GM10248 (cell line): ENCODE measurements at regions of chr12 and their contacts with region 1.

Region 1: GRCh38 chr12:53321074-53321814 is at the start of gene AAAS:
- DNase-seq: peak; percentile 97
- CTCF ChIP-seq: peak; percentile 98

Region 2: GRCh38 chr12:52603314-52603713 is 717.9 kb before region 1 on chr12:
- CTCF ChIA-PET with region 1: no interaction called
- POLR2A ChIA-PET with region 1: no interaction called
- DNase-seq: no peak
- CTCF ChIP-seq: no peak

Region 3: GRCh38 chr12:52837413-52837741 is 483.9 kb before region 1 on chr12:
- CTCF ChIA-PET with region 1: no interaction called
- POLR2A ChIA-PET with region 1: no interaction called
- DNase-seq: no peak
- CTCF ChIP-seq: no peak

Region 4: DNA sequence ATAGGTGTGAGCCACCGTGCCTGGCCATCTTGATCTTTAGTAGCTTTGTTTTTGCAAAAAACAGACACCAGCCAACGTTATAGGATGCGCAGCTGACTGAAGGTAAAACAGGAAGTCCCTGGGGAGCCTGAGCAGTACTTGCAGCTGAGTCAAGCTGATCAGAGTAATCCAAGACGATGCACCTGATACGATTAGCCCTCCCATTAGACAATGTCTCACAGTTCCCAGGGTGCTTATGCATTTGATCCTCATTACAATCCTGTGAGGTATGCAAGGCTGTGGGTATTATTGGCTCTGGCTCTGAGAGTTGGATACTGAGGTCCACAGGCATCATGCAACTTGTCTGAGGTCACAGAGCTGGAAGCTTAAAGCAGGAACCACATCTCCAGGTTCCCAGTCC is 364.3 kb before region 1 on chr12:
- CTCF ChIA-PET with region 1: no interaction called
- POLR2A ChIA-PET with region 1: no interaction called
- DNase-seq: no peak
- CTCF ChIP-seq: no peak

Region 5: DNA sequence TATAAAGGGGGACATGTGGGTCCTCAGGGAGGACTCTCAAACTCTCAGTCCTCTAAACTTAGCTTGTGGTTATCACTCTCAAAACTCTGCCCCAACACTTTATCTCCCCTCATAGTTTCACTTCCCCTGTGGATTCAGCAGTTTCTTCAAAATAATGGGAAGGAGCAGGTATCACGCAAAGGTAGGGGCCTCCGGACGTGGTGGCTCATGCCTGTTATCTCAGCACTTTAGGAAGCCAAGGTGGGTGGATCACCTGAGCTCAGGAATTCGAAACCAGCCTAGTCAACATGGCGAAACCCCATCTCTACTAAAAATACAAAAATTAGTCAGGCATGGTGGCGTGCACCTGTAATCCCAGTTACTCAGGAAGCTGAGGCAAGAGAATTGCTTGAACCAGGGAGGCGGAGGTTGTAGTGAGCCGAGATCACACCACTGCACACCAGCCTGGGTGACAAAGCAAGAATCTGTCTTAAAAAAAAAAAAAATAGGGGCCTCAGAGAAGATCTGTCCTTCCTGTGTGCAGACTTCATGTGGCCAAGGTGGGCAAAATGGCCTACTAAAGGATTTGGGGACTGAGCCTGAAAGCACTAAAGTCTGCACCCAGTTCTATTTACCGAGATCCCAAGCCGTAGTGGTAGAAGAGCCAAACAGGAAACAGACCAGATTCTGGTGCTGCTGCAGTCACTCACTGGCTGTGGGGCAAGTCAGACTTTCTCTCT is 120.6 kb before region 1 on chr12:
- CTCF ChIA-PET with region 1: interaction called, 206 read pairs
- POLR2A ChIA-PET with region 1: no interaction called
- DNase-seq: peak; percentile 52
- CTCF ChIP-seq: no peak

Region 6: GRCh38 chr12:53267999-53268647 is 53.1 kb before region 1 on chr12 and contains the start of gene ESPL1:
- CTCF ChIA-PET with region 1: interaction called, 50 read pairs
- POLR2A ChIA-PET with region 1: interaction called, 7 read pairs
- DNase-seq: peak; percentile 92
- CTCF ChIP-seq: peak; percentile 39

Region 7: GRCh38 chr12:53295070-53295890 is 26.0 kb before region 1 on chr12 and contains the start of gene PFDN5:
- CTCF ChIA-PET with region 1: interaction called, 183 read pairs
- POLR2A ChIA-PET with region 1: interaction called, 9 read pairs
- DNase-seq: peak; percentile 92
- CTCF ChIP-seq: no peak

Region 8: GRCh38 chr12:53344824-53345485 is 23.7 kb after region 1 on chr12:
- CTCF ChIA-PET with region 1: interaction called, 442 read pairs
- POLR2A ChIA-PET with region 1: interaction called, 13 read pairs
- DNase-seq: peak; percentile 84
- CTCF ChIP-seq: peak; percentile 76

Region 9: DNA sequence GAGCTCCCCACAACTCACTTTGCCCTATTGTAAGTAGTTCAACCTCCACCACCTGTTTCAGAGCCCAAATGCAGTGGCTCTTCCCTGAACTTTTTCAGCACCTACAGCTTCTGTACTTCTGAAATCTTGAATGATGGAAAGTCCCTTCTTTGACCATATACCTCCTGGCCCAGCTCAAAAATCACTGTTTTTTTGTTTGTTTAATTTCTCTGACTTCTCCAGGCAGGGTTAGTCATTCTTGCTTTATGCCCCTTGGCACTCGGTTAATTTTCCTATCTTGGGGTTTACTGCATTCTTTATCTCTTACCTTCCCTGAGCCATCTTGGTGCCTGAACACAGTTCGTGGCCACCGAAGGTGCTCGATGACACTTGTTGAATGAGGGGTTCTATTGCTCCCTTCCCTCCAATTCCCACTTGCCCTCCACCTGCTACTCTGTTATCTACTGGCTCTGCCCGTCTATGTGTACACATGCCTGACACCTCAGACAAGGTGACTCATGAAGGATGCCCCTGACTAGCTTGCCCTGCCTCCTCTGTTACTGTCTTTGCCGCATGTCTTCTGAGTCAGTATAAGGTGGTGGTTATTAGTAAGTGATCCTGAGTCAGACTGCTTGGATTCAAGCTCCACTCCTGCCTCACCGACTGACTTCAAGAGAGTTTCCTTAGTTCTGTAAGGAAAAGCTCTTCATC is 106.8 kb after region 1 on chr12:
- CTCF ChIA-PET with region 1: interaction called, 67 read pairs
- POLR2A ChIA-PET with region 1: no interaction called
- DNase-seq: no peak
- CTCF ChIP-seq: no peak